ENCODE measurements at regions of chr14 and their contacts with region 1.

Region 1: DNA sequence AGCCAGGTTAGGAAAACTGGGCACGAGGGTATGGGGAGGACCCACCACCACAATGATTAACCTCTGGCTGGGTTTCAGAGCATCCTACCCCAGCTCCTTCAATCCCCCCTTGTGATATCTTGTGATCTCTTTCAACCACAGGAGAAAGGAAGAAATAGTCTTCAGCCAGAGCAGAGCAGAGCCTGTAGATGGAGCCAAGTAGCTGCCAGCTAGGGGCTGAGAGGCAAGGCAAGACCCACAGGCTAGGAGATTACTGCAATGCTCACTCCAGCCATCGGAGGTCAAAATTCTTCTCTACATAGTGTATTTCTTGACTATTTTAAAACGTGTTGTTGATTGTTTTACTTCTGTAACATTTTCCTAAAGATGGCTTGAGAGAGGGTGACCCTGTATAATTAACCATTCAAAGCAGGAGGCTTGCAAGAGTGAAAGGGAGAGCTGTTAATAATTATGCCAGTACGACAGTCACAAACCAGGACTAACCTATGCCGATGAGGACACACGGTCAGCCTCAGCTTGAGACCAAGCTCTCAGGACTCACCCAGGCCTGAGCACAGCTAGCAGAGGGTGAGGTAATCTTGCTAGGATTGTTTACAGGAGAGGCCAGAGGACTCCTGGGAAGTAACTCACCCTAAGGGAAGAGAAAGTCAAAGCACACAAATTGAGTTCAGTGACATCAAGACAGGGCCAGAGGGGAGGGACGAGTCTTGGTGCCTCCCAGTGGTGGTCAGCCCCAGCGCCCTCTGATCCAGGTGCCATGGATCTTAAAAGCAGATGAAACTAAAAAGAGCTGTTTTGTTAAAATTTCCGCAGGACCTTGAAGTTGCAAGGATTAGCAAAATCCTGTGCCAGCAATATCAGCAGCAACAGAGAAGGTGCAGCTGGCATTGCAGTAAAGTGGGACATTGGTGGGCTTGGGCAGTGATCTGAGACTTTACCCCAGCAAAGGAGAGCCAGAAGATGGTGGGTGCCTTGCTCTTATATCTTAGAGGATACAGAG is 29.8 kb upstream of the CDKN3 start:
- H3K4me3 ChIP-seq: no peak overlapping the region
- H3K27ac ChIP-seq: no peak overlapping the region
- H3K4me1 ChIP-seq: no peaks in the 10 kb centered on the region
- CTCF ChIP-seq: peak; percentile 29; the same call in 1 of the 2 replicates

Region 2: DNA sequence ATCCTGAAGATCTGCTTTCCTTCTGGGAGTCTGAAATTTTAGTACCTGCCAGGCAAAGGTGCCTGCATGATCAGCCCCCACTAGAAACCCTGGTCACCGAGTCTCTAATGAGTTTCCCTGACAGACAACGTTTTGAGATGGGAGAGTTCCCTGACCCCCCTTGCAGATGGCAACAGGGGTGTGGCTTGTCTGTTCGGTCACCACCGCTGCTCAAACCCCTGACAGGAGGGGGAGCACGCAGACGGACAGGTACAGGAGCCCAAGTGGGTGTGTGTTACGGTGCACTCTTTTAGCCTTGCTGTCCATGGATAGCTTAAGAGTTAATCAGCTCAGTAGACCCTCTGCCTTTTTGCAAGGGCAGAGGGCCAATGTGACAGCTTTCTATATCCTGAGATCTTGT is 10.5 kb after region 1 on chr14:
- CTCF ChIA-PET with region 1: interaction called, 12 read pairs
- POLR2A ChIA-PET with region 1: no interaction called
- H3K4me3 ChIP-seq: no peak overlapping the region
- H3K27ac ChIP-seq: no peak overlapping the region
- H3K4me1 ChIP-seq: no peaks in the 10 kb centered on the region
- CTCF ChIP-seq: no peak

Region 3: GRCh38 chr14:54424479-54424901 is 57.5 kb after region 1 on chr14:
- CTCF ChIA-PET with region 1: interaction called, 11 read pairs
- POLR2A ChIA-PET with region 1: interaction called, 3 read pairs
- H3K4me3 ChIP-seq: no peak overlapping the region
- H3K27ac ChIP-seq: no peak overlapping the region
- H3K4me1 ChIP-seq: no peaks in the 10 kb centered on the region
- CTCF ChIP-seq: no peak

Measured in HEK293 (cell line).